CD4-positive, alpha-beta memory T cell (primary cell): ENCODE measurements at regions of chr2 and their contacts with region 1.

Region 1: GRCh38 chr2:239910851-239911640 is 114.1 kb downstream of the NDUFA10 start:
- DNase-seq: peak in 3 of 5 donors; percentile 9 to 16 (median 15)
- H3K4me3 ChIP-seq: peak overlapping the region in 1 of 2 donors; percentile 5
- H3K4me3 Mint-ChIP-seq: peak overlapping the region in 7 of 8 donors; percentile 3 to 81 (median 69)
- H3K27ac ChIP-seq: peak overlapping the region; percentile 26
- H3K27ac Mint-ChIP-seq: peak overlapping the region; percentile 74 to 92 (median 87)
- H3K4me1 ChIP-seq: peaks cover 21% of the 10 kb centered on the region
- H3K4me1 Mint-ChIP-seq: peaks cover 6 to 23% (median 14%) of the 10 kb centered on the region in 4 donors
- H3K27me3 ChIP-seq: no peaks in the 10 kb centered on the region
- H3K27me3 Mint-ChIP-seq: no peaks in the 10 kb centered on the region

Region 2: GRCh38 chr2:239927424-239927981 is 16.5 kb after region 1 on chr2:
- CTCF ChIA-PET with region 1: interaction called, 5 read pairs
- POLR2A ChIA-PET with region 1: interaction called, 12 read pairs
- intact Hi-C with region 1: no loop called
- DNase-seq: peak; percentile 45 to 90 (median 56)
- H3K4me3 ChIP-seq: peak overlapping the region; percentile 39 to 48
- H3K4me3 Mint-ChIP-seq: peak overlapping the region; percentile 79 to 91 (median 86)
- H3K27ac ChIP-seq: peak overlapping the region; percentile 27
- H3K27ac Mint-ChIP-seq: peak overlapping the region; percentile 73 to 91 (median 86)
- H3K4me1 ChIP-seq: peaks cover 10% of the 10 kb centered on the region
- H3K4me1 Mint-ChIP-seq: peaks cover 9 to 21% (median 12%) of the 10 kb centered on the region in 4 donors
- H3K27me3 ChIP-seq: no peaks in the 10 kb centered on the region
- H3K27me3 Mint-ChIP-seq: peaks cover 4 to 5% of the 10 kb centered on the region in 2 donors